ENCODE measurements at regions of chr6 and their contacts with region 1.

Region 1: DNA sequence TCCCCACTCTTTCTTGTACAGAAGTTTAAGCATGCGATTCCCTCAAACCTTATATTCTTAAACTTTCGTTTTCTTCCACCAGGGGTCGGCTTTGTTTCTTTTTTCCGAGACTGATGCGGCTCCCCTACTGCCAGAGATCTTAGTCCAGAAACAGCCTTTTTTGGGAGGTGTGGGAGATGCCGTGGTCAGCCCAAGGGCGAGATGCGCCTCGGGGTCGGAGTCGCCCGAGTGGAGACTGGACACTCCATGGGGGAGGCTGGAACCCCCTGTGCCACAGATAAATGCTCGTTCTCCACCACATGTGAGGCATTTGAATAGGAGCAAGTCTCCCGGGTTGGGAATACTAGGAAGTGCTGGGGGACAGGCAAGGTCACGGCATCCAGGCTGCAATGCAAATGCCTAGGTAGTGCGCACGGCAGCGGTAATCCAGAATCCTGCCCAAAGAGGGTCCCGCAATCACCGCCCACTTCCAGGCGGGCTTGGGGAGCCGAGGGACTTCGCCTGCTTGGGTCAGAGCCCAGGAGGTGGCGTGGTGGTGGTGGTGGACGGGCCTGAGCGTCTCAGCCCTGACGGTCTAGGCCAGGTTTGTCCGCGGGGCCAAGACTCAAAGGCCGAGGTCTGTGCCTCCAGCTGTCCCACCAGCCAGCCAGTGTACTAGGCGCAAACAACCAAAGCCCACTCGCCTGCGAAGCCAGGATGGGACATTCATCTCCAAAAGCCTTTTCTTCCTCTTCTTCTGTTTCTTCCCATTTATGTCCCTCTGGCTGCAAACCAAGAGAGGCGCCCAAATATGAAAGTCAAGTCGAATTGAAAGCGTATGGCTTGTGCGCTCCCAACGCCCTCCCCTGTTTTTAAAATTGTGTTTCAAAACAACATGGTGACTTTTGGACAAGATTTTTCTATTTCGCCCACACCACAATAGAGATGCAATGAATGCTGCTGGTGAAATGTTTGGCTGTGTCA is 39.3 kb upstream of the OSTM1 start:
- H3K4me3 ChIP-seq: no peak overlapping the region
- H3K27ac ChIP-seq: no peak overlapping the region
- H3K4me1 ChIP-seq: no peaks in the 10 kb centered on the region
- CTCF ChIP-seq: peak; percentile 77

Region 2: GRCh38 chr6:108102965-108103364 is 10.9 kb before region 1 on chr6:
- CTCF ChIA-PET with region 1: interaction called, 14 read pairs
- POLR2A ChIA-PET with region 1: no interaction called
- H3K4me3 ChIP-seq: no peak overlapping the region
- H3K27ac ChIP-seq: no peak overlapping the region
- H3K4me1 ChIP-seq: no peaks in the 10 kb centered on the region
- CTCF ChIP-seq: no peak

Region 3: GRCh38 chr6:108526739-108527174 is 412.9 kb after region 1 on chr6:
- CTCF ChIA-PET with region 1: interaction called, 39 read pairs
- POLR2A ChIA-PET with region 1: no interaction called
- H3K4me3 ChIP-seq: no peak overlapping the region
- H3K27ac ChIP-seq: no peak overlapping the region
- H3K4me1 ChIP-seq: no peaks in the 10 kb centered on the region
- CTCF ChIP-seq: no peak; the same call in 1 of the 2 replicates